WTC11 (cell line): ENCODE measurements at regions of chr10 and their contacts with region 1.

Region 1: GRCh38 chr10:788796-789748 is 99.6 kb upstream of the DIP2C start:
- DNase-seq: peak; percentile 78
- ATAC-seq: peak; percentile 74
- H3K4me3 Mint-ChIP-seq: peak overlapping the region; percentile 74
- H3K27ac Mint-ChIP-seq: no peak overlapping the region
- H3K4me1 Mint-ChIP-seq: no peaks in the 10 kb centered on the region
- H3K27me3 Mint-ChIP-seq: peaks cover 11% of the 10 kb centered on the region
- CTCF ChIP-seq: peak; percentile 65; the same call in 1 of the 2 replicates

Region 2: DNA sequence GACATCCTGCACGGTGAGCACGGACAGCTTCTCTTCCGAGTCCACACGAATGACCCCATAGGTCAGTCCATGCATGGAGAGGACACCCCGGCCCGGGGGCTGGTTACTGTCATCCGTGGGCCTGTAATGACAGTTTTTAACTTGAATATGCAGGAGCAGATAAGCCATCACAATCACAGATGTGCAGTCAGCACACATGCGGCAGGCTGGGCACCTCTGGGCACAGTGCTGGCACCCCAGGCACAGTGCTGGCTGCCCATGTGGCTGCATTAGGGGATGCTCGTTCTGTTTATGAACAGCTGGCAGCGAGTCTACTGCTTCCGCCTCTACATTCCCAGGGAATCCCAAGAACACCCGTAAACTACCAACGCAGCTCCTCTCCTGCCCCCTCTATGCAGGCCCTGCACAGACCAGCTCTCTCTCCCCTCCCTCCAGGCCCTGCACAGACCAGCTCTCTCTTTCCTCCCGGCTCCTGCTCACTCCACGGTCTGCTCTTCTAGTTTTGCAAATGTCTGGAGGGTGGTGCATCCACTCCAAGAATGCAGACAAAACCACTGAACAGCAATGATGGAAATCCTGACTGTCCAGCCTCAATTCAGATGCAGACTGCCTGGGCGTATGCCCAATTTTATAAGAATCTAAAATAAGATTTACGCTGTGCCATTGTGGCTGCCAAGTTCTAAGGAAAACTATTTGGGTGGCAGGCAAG is 419.4 kb before region 1 on chr10:
- CTCF ChIA-PET with region 1: interaction called, 12 read pairs
- POLR2A ChIA-PET with region 1: no interaction called
- DNase-seq: no peak
- ATAC-seq: no peak
- H3K4me3 Mint-ChIP-seq: no peak overlapping the region
- H3K27ac Mint-ChIP-seq: no peak overlapping the region
- H3K4me1 Mint-ChIP-seq: peaks cover 12% of the 10 kb centered on the region
- H3K27me3 Mint-ChIP-seq: no peaks in the 10 kb centered on the region
- CTCF ChIP-seq: no peak

Region 3: DNA sequence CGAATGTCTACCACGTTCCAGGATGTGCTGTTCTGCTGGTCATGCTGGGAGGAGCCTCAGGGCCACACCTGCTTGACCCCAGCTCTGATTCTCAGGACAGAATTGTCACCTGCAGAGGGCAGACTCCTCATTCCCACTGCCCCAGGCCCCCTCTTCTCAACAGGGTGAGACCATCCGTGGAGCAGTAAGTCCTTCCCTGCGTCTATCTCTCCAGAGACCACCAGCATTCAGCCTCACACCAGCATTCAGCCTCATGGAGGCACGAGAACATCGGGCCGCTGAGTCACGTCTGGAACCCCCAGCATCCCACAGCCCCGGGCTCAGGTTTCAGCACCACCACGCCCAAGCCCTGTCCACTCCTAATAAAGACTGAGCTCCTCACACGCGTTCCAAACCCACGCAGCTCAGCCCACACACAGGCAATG is 373.0 kb before region 1 on chr10:
- CTCF ChIA-PET with region 1: interaction called, 15 read pairs
- POLR2A ChIA-PET with region 1: interaction called, 3 read pairs
- DNase-seq: peak; percentile 41
- ATAC-seq: peak; percentile 92
- H3K4me3 Mint-ChIP-seq: no peak overlapping the region
- H3K27ac Mint-ChIP-seq: no peak overlapping the region
- H3K4me1 Mint-ChIP-seq: peaks cover 4% of the 10 kb centered on the region
- H3K27me3 Mint-ChIP-seq: no peaks in the 10 kb centered on the region
- CTCF ChIP-seq: no peak

Region 4: DNA sequence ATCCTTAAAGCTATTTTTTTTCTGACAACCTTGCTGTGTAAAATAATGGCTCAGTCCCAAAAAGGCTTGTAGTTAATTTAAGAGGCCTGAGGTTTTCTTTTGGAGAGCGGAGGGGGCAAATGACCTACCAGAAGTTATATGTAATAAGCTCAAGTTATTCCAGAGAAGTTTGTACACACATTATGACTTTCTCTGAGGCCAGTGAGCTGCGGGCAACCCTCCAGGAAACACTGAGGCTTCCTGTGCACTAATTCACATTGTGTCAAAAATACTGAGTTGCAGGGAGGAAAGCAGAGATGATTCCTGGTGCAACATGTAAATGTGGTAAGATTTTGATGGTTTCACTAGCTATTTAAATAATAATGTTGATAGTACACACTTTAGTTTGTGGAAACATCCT is 288.2 kb before region 1 on chr10:
- CTCF ChIA-PET with region 1: interaction called, 11 read pairs
- POLR2A ChIA-PET with region 1: no interaction called
- DNase-seq: no peak
- ATAC-seq: no peak
- H3K4me3 Mint-ChIP-seq: no peak overlapping the region
- H3K27ac Mint-ChIP-seq: no peak overlapping the region
- H3K4me1 Mint-ChIP-seq: peaks cover 11% of the 10 kb centered on the region
- H3K27me3 Mint-ChIP-seq: peaks cover 54% of the 10 kb centered on the region
- CTCF ChIP-seq: no peak

Region 5: DNA sequence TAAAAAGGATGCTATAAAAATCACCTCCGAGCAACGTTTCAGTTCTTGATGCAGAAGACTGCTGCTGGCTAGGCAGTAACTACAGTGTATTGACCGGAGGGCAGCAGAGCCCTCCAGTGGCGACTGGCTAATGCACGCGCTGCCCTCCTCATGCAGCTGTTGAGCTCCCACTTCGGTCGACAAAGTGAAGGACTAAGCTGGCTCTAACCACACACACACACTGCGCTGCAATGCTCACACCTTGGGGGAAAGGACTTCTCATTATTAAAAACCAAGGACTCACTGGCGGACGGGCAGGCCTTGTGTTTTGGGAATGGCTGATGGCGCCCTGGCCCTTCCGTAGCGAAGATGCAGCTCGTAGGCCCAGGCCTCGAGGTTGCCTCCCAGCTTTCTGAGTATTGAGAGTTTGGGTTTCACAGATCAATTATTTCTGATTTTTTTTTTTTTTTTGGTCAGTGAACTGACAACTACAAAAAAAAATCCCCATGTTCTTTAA is 21.3 kb after region 1 on chr10:
- CTCF ChIA-PET with region 1: interaction called, 19 read pairs
- POLR2A ChIA-PET with region 1: no interaction called
- DNase-seq: no peak
- ATAC-seq: peak; percentile 84
- H3K4me3 Mint-ChIP-seq: no peak overlapping the region
- H3K27ac Mint-ChIP-seq: no peak overlapping the region; the same call in 1 of the 2 replicates
- H3K4me1 Mint-ChIP-seq: no peaks in the 10 kb centered on the region
- H3K27me3 Mint-ChIP-seq: no peaks in the 10 kb centered on the region; the same call in 1 of the 2 replicates
- CTCF ChIP-seq: no peak